ENCODE measurements at regions of chr19 and their contacts with region 1.

Region 1: GRCh38 chr19:9934132-9934950 is 2.0 kb downstream of the OLFM2 start:
- DNase-seq: peak; percentile 83
- H3K4me3 Mint-ChIP-seq: no peak overlapping the region
- H3K27ac Mint-ChIP-seq: no peak overlapping the region
- H3K4me1 Mint-ChIP-seq: peaks cover 12% of the 10 kb centered on the region
- H3K27me3 Mint-ChIP-seq: peaks cover 60% of the 10 kb centered on the region
- CTCF ChIP-seq: peak; percentile 97

Region 2: DNA sequence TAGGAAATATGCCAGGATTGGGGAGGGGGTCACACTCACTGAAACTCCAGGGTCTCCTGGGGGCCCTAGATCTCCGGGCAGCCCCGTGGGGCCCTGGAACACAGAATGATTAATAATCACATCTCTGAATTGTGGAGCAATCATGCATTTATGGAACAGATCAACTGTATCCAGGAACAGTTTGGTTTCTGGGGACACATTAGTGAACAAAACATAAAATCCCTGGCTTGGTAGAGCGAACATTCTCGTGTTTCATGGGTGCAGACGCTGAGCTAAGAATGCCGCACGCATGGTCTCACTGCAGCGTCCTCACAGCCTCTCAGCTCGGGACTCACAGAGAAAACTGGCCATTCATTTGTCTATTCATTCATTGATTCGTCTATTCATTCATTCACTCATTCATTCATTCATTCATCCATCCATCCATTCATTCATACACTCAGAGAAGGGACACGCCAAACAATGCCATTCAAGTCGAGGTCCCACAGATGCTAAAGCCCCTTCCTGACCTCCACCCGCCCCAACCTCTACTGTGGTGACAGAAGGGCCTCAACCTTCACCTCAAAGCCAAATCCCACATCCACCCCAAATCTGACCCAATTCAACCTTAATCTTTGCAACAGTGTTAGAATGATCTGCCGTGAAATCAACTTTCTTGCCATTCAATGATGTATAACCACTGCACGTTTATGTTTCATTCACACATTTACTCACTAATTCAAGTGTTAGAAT is 37.0 kb after region 1 on chr19:
- CTCF ChIA-PET with region 1: no interaction called
- POLR2A ChIA-PET with region 1: no interaction called
- intact Hi-C with region 1: no loop called
- DNase-seq: no peak
- H3K4me3 Mint-ChIP-seq: no peak overlapping the region
- H3K27ac Mint-ChIP-seq: no peak overlapping the region
- H3K4me1 Mint-ChIP-seq: peaks cover 5% of the 10 kb centered on the region
- H3K27me3 Mint-ChIP-seq: peaks cover 27% of the 10 kb centered on the region
- CTCF ChIP-seq: no peak

Region 3: GRCh38 chr19:10000171-10000826 is 66.0 kb after region 1 on chr19:
- CTCF ChIA-PET with region 1: interaction called, 60 read pairs
- POLR2A ChIA-PET with region 1: no interaction called
- intact Hi-C with region 1: loop called (anchors 1 kb)
- DNase-seq: peak; percentile 69
- H3K4me3 Mint-ChIP-seq: no peak overlapping the region
- H3K27ac Mint-ChIP-seq: no peak overlapping the region
- H3K4me1 Mint-ChIP-seq: peaks cover 12% of the 10 kb centered on the region
- H3K27me3 Mint-ChIP-seq: peaks cover 46% of the 10 kb centered on the region
- CTCF ChIP-seq: peak; percentile 70

Region 4: GRCh38 chr19:10027158-10027693 is 92.9 kb after region 1 on chr19:
- CTCF ChIA-PET with region 1: interaction called, 106 read pairs
- POLR2A ChIA-PET with region 1: interaction called, 3 read pairs
- intact Hi-C with region 1: loop called (anchors 1 kb)
- DNase-seq: peak; percentile 15
- H3K4me3 Mint-ChIP-seq: no peak overlapping the region
- H3K27ac Mint-ChIP-seq: no peak overlapping the region
- H3K4me1 Mint-ChIP-seq: no peaks in the 10 kb centered on the region
- H3K27me3 Mint-ChIP-seq: peaks cover 16% of the 10 kb centered on the region
- CTCF ChIP-seq: no peak

Region 5: GRCh38 chr19:10251792-10252694 is 317.7 kb after region 1 on chr19 and contains the start of gene MRPL4:
- CTCF ChIA-PET with region 1: interaction called, 24 read pairs
- POLR2A ChIA-PET with region 1: interaction called, 6 read pairs
- intact Hi-C with region 1: loop called (anchors 1 kb)
- DNase-seq: peak; percentile 100
- H3K4me3 Mint-ChIP-seq: peak within 1 kb of the TSS; percentile 92
- H3K27ac Mint-ChIP-seq: peak within 1 kb of the TSS; percentile 97
- H3K4me1 Mint-ChIP-seq: peaks cover 5% of the 10 kb centered on the region
- H3K27me3 Mint-ChIP-seq: no peaks in the 10 kb centered on the region
- CTCF ChIP-seq: no peak
- total RNA-seq, gene MRPL4: 99.1 and 120 TPM in 2 replicates